ENCODE measurements at regions of chr3 and their contacts with region 1.

Region 1: GRCh38 chr3:155431856-155432570 is 138.5 kb upstream of the STRIT1 start:
- DNase-seq: no peak

Region 2: GRCh38 chr3:155372281-155372680 is 59.7 kb before region 1 on chr3:
- intact Hi-C with region 1: no loop called
- DNase-seq: no peak

Region 3: GRCh38 chr3:155411500-155412223 is 20.4 kb before region 1 on chr3:
- intact Hi-C with region 1: loop called in 1 of 2 experiments (anchors 1 kb)
- DNase-seq: no peak